OCI-LY7 (cell line): ENCODE measurements at regions of chr3 and their contacts with region 1.

Region 1: DNA sequence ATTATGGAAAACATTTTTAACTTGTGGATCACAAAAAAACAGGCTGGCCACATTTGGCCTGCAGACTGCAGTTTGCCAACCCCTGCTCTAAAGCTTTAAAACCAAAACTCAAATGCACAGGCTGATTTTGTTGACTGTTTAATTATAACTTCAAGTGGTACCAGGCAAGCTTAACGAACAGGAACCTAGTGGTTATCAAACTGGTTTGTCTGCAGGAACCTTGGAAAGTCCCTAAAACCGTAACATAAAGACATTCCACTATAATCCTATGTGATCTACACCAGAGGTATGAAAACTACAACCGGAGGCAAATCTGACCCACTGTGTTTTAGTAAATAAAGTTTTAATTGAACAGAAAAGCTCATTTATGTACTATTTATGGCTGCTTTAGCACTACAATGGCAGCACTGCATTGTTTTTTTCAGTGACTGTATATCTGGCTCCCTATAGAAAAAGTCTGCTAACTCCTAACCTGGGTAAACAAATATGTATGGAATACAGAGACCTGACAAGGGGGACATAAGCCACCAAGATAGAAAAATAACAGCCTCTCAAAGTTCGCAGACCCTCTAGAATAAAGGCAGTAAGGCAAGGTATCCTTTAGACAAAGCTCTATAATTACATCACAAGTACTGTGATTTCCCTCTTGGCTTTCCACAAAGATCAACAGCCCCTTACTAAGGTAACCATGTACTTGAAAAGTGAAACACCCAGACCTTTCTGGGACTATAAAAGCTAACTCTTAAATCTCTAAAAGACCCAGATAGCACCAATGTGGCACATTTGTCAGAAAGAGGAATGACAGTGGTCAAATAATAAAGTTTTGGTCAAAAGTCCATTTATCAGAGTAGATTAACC is 52.1 kb downstream of the TBL1XR1 start:
- DNase-seq: peak; percentile 52
- H3K4me3 ChIP-seq: peak overlapping the region; percentile 46
- H3K27ac ChIP-seq: peak overlapping the region; percentile 71
- H3K4me1 ChIP-seq: peaks cover 79% of the 10 kb centered on the region
- CTCF ChIP-seq: no peak

Region 2: GRCh38 chr3:175743733-175744400 is 1401.3 kb before region 1 on chr3:
- CTCF ChIA-PET with region 1: no interaction called
- POLR2A ChIA-PET with region 1: no interaction called
- intact Hi-C with region 1: no loop called
- DNase-seq: no peak
- H3K4me3 ChIP-seq: no peak overlapping the region
- H3K27ac ChIP-seq: no peak overlapping the region
- H3K4me1 ChIP-seq: no peaks in the 10 kb centered on the region
- CTCF ChIP-seq: no peak

Region 3: GRCh38 chr3:177057768-177058167 is 87.4 kb before region 1 on chr3:
- CTCF ChIA-PET with region 1: no interaction called
- POLR2A ChIA-PET with region 1: interaction called, 6 read pairs
- intact Hi-C with region 1: loop called (anchors 5 kb)
- DNase-seq: peak; percentile 58
- H3K4me3 ChIP-seq: peak overlapping the region; percentile 25
- H3K27ac ChIP-seq: peak overlapping the region; percentile 47
- H3K4me1 ChIP-seq: peaks cover 77% of the 10 kb centered on the region
- CTCF ChIP-seq: no peak

Region 4: DNA sequence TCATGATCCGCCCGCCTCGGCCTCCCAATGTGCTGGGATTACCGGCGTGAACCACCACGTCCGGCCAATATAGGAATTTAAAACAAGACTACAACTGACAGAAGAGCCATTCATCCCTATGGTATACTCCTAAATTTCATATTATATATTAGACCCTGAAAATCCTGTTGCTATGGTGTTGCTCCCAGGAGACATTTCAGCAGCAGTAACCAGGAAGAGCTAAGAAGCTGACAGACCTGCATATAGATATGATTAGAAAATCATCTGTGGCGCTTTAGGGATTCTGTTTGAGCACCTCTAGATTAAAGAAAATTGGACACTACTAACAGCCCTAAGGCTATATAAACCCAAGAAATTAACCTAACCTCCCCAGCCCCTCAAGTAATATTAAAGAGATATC is 13.3 kb after region 1 on chr3:
- CTCF ChIA-PET with region 1: no interaction called
- POLR2A ChIA-PET with region 1: interaction called, 16 read pairs
- intact Hi-C with region 1: no loop called
- DNase-seq: no peak
- H3K4me3 ChIP-seq: no peak overlapping the region
- H3K27ac ChIP-seq: no peak overlapping the region
- H3K4me1 ChIP-seq: no peaks in the 10 kb centered on the region
- CTCF ChIP-seq: no peak

Region 5: DNA sequence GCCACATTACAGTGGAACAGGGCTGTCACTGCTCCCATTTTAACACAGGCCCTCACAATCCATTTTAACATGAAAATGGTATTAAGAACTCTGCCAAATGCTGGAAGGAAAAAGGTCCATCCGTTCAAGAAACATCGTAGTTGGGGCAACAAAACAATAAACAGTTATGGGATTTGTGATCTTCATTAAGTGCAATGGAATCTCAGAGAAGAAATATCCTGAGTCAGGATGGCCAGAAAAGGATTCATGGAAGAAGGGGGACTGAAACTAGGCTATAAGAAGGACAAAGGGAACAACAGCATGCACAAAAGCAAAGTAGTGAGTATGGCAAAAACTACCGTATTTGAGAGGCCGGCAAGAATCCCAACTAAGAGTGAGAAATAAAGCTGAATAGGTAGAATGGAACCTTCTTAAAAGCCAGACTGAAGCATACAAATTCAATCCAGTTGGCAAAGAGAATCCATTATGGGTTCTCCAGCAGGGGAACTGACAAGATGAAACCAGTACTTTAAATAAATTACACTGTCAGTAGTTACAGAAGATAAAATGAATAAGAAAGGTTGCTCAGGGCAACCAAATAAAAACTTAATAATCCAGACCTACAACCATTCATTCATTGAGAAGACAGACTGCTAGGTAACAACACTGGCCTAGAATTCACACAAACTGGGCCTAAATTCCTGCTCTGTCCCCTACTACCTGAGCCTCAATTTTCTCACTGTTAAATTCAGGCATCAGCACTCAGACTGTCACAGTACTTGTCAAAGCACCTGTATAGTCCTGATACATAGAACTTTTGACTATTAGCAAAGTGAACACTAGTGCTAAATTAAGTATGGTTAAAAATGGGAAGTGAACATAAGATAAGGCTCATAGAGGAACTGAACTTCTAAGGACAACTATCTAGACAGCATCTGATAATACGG is 45.9 kb after region 1 on chr3:
- CTCF ChIA-PET with region 1: no interaction called
- POLR2A ChIA-PET with region 1: interaction called, 4 read pairs
- intact Hi-C with region 1: loop called (anchors 5 kb)
- DNase-seq: peak; percentile 27
- H3K4me3 ChIP-seq: no peak overlapping the region
- H3K27ac ChIP-seq: no peak overlapping the region
- H3K4me1 ChIP-seq: peaks cover 45% of the 10 kb centered on the region
- CTCF ChIP-seq: no peak

Region 6: DNA sequence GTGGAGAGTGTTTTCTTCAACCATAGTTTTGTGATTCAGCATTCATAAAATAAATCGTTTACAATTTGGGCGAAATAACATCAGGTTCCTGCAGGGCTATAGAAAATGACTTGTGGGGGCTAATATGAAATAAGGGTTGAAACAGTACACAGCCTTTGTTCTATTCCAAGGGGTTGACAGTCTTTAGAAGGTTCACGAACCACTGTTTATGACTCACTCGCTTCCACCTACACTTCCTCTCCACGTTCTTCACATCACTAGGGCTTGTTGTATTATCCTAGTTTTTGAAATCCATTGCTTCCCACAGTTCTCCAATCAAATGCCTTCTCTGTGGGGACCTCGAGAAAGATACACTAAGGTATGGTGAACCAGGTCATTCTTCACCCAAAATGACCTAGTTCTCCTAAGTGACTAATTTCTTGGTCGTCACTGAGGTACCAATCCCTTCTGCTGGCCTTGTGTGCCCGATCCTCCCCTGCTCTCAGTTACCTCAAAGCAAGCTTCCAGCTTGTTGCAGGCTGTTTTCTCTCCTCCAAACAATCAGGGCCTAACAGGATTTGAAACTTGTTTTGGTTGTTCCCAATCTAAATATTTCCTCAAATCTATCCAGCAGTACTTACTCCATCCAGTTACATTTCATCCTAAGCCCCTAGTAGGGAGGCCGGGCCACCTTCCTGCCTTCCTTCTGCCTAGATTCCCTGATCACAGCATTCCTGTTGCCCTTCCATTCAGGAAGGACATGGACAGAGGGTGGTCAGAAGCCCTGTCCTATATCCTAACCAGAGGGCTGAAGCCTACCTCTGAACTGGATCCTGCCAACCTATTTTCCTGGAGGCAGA is 75.2 kb after region 1 on chr3:
- CTCF ChIA-PET with region 1: no interaction called
- POLR2A ChIA-PET with region 1: no interaction called
- intact Hi-C with region 1: no loop called
- DNase-seq: no peak
- H3K4me3 ChIP-seq: no peak overlapping the region
- H3K27ac ChIP-seq: no peak overlapping the region
- H3K4me1 ChIP-seq: peaks cover 15% of the 10 kb centered on the region
- CTCF ChIP-seq: no peak

Region 7: GRCh38 chr3:177448987-177449975 is 304.1 kb after region 1 on chr3:
- CTCF ChIA-PET with region 1: no interaction called
- POLR2A ChIA-PET with region 1: no interaction called
- intact Hi-C with region 1: no loop called
- DNase-seq: no peak
- H3K4me3 ChIP-seq: no peak overlapping the region
- H3K27ac ChIP-seq: no peak overlapping the region
- H3K4me1 ChIP-seq: no peaks in the 10 kb centered on the region
- CTCF ChIP-seq: no peak